ENCODE measurements at regions of chr4 and their contacts with region 1.

Region 1: GRCh38 chr4:152039023-152039481 is 278.2 kb upstream of the GATB start:
- DNase-seq: peak in 2 of 5 donors; percentile 27 to 74
- ATAC-seq: peak; percentile 83 to 94 (median 86)
- H3K4me3 ChIP-seq: no peak overlapping the region
- H3K27ac ChIP-seq: peak overlapping the region; percentile 47 to 99 (median 89)
- H3K4me1 ChIP-seq: peaks cover 0 to 21% (median 5%) of the 10 kb centered on the region in 12 donors
- H3K27me3 ChIP-seq: no peaks in the 10 kb centered on the region
- CTCF ChIP-seq: no peak
- POLR2A ChIP-seq: no peak

Region 2: DNA sequence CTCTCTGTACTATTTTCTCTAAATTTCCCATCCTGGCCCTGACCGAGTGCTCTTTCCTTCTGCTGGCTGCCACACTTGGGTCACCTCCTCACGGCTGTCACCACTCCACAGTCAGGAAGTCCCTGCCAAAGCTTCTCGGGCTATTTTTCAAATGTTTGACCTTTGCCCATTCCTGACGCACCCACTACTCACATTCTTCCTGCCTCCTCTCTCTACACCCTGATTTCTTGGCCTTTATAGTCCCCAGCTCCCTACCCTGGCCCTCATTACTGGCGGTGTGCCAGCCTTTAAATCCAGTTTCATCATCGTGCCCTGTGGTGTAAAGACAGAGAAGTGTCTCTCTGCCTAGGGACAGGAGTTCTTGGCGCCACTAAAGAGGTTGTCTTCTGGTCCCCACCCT is 231.8 kb before region 1 on chr4:
- intact Hi-C with region 1: loop called in 5 of 10 experiments (anchors 1 to 10 kb)
- DNase-seq: peak in 4 of 5 donors; percentile 69 to 83 (median 75)
- ATAC-seq: peak; percentile 94 to 95 (median 94)
- H3K4me3 ChIP-seq: no peak overlapping the region
- H3K27ac ChIP-seq: peak overlapping the region; percentile 53 to 97 (median 82)
- H3K4me1 ChIP-seq: peaks cover 0 to 19% (median 5%) of the 10 kb centered on the region in 12 donors
- H3K27me3 ChIP-seq: no peaks in the 10 kb centered on the region
- CTCF ChIP-seq: no peak
- POLR2A ChIP-seq: no peak

Region 3: DNA sequence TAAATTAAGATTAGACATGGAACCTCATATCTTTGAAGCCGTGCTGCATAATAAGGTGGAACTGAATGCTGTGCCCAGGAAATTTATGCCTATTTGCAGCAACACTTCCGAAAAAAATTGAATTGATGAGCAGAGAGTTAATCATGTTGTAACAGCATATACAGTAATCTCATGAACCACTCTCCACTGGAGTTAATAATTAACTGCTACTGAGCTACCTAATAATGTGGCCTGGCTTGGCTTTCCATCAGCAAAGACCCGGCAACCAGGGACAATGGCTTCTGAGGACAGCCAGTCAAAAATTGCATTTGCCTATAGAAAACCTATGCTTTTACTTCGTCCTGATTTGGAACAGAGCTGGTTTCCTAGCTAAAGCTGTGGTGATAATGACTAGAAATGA is 214.4 kb before region 1 on chr4:
- intact Hi-C with region 1: no loop called
- DNase-seq: no peak
- ATAC-seq: no peak
- H3K4me3 ChIP-seq: no peak overlapping the region
- H3K27ac ChIP-seq: no peak overlapping the region
- H3K4me1 ChIP-seq: peaks cover 0 to 9% (median 0%) of the 10 kb centered on the region in 12 donors
- H3K27me3 ChIP-seq: no peaks in the 10 kb centered on the region
- CTCF ChIP-seq: no peak
- POLR2A ChIP-seq: no peak

Region 4: DNA sequence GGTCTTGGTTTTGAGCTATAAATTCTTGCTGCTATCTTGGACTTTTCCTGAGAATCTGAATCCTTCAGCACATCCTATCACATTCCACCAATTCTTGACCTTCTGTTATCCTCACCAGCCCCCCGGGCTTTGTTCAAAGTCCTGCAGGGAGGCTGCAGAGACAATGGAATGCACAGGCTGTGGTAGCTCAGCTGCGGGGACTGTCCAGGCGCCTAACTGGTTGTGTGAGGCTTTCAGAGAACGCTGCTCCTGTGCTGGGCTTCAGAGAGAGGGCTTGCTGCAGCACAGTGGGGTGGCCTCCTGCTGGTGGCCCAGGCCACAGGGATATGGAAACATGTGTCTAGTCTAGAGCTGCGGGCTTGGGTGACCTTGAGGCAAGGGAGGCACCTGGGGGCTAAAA is 81.9 kb before region 1 on chr4:
- intact Hi-C with region 1: loop called in 1 of 10 experiments (anchors 5 kb)
- DNase-seq: peak in 3 of 5 donors; percentile 20 to 38 (median 30)
- ATAC-seq: peak in 3 of 4 donors; percentile 32 to 62 (median 50)
- H3K4me3 ChIP-seq: no peak overlapping the region
- H3K27ac ChIP-seq: peak overlapping the region in 7 of 12 donors; percentile 28 to 75 (median 49)
- H3K4me1 ChIP-seq: peaks cover 0 to 30% (median 10%) of the 10 kb centered on the region in 12 donors
- H3K27me3 ChIP-seq: no peaks in the 10 kb centered on the region
- CTCF ChIP-seq: peak in 3 of 12 donors; percentile 7 to 31 (median 13)
- POLR2A ChIP-seq: no peak

Region 5: GRCh38 chr4:151990201-151990600 is 48.9 kb before region 1 on chr4:
- intact Hi-C with region 1: loop called in 2 of 10 experiments (anchors 5 kb)
- DNase-seq: no peak
- ATAC-seq: no peak
- H3K4me3 ChIP-seq: no peak overlapping the region
- H3K27ac ChIP-seq: peak overlapping the region in 3 of 12 donors; percentile 29 to 58 (median 56)
- H3K4me1 ChIP-seq: peaks cover 0 to 30% (median 8%) of the 10 kb centered on the region in 12 donors
- H3K27me3 ChIP-seq: no peaks in the 10 kb centered on the region
- CTCF ChIP-seq: no peak
- POLR2A ChIP-seq: no peak

Region 6: DNA sequence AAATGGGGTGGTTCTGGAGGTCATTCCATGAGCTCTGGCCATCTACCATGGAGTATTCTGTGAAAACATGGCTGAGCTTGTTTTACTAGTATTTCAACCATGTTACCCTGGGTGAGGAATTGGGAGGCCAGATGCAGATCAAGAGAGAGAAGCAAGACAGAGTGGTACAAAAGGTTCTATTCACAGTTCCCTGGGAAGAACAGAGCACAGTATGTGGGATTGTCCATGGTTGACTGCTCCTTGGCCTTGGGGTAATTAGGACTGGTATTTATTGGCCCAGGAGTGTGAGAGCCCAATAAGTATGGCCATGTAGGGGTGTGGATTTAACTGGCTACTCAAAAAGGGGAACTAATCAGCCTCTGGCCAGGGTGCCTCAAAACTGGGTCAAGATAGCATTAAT is 38.5 kb before region 1 on chr4:
- intact Hi-C with region 1: no loop called
- DNase-seq: no peak
- ATAC-seq: no peak
- H3K4me3 ChIP-seq: no peak overlapping the region
- H3K27ac ChIP-seq: no peak overlapping the region
- H3K4me1 ChIP-seq: peaks cover 0 to 6% (median 0%) of the 10 kb centered on the region in 12 donors
- H3K27me3 ChIP-seq: no peaks in the 10 kb centered on the region
- CTCF ChIP-seq: no peak
- POLR2A ChIP-seq: no peak

Region 7: DNA sequence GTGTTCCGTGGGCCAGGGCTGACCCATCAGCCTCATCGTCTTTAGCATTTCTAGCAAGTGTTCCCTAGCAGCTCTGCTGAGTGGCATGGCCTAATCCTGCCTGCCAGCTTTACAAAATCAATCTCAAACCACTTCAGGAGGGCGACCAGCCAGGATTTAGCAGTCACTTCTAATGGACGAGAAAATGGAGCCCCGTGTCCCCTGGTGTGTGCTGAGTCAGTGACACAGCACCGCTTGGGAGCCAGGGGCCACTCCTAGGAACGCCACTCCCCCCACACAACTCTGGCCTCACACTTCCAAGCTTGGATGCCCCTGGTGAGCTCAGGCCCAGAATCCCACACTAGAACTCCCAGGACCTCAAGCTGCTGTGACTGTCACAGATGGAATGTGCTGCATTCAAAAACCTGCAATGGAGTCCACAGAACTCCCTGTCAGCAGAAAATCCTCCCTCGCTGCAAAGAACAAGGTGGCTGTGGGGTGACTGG is 33.0 kb after region 1 on chr4:
- intact Hi-C with region 1: loop called in 1 of 10 experiments (anchors 1 kb)
- DNase-seq: peak in 3 of 5 donors; percentile 54 to 65 (median 56)
- ATAC-seq: peak; percentile 75 to 80 (median 77)
- H3K4me3 ChIP-seq: no peak overlapping the region
- H3K27ac ChIP-seq: peak overlapping the region in 9 of 12 donors; percentile 30 to 77 (median 55)
- H3K4me1 ChIP-seq: peaks cover 0 to 16% (median 0%) of the 10 kb centered on the region in 12 donors
- H3K27me3 ChIP-seq: no peaks in the 10 kb centered on the region
- CTCF ChIP-seq: no peak
- POLR2A ChIP-seq: no peak

Measured in heart left ventricle (tissue), 16 donors.